Left colon (tissue), 2 donors: ENCODE measurements at regions of chr14 and their contacts with region 1.

Region 1: GRCh38 chr14:50109342-50109741 is 7.0 kb downstream of the VCPKMT start:
- DNase-seq: no peak
- ATAC-seq: no peak

Region 2: GRCh38 chr14:49862089-49862673 is 247.2 kb before region 1 on chr14:
- intact Hi-C with region 1: loop called (anchors 5 to 10 kb)
- DNase-seq: peak; percentile 71 to 88
- ATAC-seq: peak; percentile 52

Region 3: GRCh38 chr14:49971156-49972130 is 137.9 kb before region 1 on chr14:
- intact Hi-C with region 1: no loop called
- DNase-seq: no peak
- ATAC-seq: peak; percentile 33

Region 4: DNA sequence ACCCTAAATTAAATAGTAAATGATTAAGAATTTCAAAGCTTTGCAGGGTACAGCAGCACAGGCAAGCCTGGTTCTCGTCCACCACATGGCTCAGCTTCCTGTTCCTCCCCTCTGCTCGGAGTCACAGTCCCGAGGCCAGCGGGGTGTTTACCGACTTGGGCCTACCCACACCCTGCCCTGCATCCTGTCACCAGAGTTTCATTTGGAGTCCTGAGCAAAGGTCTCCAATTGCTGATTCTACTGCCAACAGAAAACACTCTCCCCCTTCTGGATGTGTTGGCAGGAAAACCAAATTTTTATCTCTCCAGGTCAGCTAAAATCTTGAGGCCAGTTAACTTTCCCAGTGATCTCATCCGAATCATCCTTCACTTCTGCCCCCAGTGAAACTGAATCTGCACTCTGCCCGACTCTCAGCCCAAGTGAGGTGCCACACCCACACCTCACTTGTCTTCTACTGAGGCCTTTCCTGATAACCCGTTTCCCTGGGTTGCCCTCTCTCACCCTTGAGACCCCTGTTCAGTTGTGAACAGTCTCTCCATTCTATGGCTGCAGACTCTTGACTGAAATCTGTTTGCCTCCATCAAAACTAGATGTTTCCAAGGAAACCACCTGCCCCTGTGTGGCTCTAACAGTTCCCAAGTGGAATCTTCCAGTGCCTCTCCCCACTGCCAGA is 64.2 kb before region 1 on chr14:
- intact Hi-C with region 1: loop called in 1 of 2 experiments (anchors 10 kb)
- DNase-seq: peak; percentile 86 to 95
- ATAC-seq: peak; percentile 80